ENCODE measurements at regions of chr12 and their contacts with region 1.

Region 1: DNA sequence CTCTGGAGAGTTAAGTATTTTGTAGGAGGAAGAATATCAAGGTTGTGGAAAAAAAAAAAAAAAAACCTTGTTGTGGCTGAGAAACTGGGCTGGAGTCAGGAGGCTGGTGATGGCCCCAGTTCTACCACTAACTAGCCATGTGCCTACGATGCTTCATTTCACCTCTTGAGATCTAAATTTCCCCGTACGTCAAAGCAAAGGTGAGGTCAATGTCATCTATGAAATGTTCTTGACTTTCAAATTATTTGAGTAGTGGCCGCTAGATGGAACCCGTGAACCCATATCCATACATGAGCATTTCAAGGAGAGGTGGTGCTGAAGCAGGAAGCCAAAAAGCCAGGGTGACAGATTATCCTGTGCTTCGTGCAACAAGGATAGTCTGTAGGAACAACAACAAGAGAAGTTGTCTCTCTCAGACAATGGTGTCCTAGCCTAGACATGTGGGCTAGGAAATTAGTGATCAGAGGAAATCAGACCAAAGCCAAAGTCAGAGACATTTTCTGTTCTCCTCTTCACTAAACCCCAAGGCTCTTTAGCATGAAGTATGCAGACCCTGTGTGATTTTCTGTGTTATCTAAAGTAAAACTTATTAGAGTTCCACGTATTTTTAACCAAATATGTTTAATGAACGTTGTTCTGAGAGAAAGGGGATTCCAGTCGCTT is 95.5 kb upstream of the ETV6 start:
- DNase-seq: peak; percentile 34
- ATAC-seq: peak; percentile 66
- H3K4me3 ChIP-seq: no peak overlapping the region
- H3K27ac ChIP-seq: no peak overlapping the region
- H3K4me1 ChIP-seq: no peaks in the 10 kb centered on the region
- H3K27me3 ChIP-seq: no peaks in the 10 kb centered on the region; a peak in 1 of 5 replicates
- CTCF ChIP-seq: peak; percentile 73
- EP300 ChIP-seq: no peak
- POLR2A ChIP-seq: no peak
- RAD21 ChIP-seq: no peak

Region 2: DNA sequence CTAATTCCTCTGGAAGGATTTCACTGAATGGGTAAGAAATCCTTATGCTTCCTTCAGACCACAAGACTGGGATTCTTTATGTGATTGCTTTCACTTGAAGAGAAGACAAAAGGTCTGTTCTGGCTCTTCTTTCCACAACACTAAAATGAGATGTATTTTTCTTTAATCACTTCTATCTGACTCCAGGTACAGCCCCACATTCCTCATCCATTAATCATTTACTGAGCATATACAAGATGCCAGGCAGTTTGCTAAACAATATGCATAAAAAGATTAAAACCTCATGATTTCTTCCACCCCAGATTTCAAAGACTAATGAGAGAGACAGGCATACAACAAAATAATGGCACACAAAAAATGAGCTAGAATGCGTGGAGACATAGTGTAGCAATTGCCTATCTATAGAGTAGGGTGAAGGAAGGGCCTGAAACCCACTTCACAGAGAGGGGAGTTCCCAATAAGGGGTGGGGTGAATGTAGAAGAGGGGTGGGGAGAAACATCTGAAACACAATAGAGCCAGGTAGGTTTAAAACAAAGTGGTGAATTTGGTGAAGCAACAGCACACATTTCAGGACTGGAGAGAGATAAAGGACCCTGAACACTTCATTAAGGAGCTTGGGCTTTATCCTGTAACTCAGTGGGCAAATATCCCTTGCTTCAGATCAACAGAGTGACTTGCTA is 93.5 kb before region 1 on chr12:
- CTCF ChIA-PET with region 1: no interaction called
- POLR2A ChIA-PET with region 1: no interaction called
- in situ Hi-C with region 1: no loop called
- intact Hi-C with region 1: no loop called
- DNase-seq: no peak
- ATAC-seq: no peak
- H3K4me3 ChIP-seq: no peak overlapping the region
- H3K27ac ChIP-seq: no peak overlapping the region
- H3K4me1 ChIP-seq: no peaks in the 10 kb centered on the region
- H3K27me3 ChIP-seq: peaks cover 0 to 2% of the 10 kb centered on the region in 2 experiments; a peak in 2 of 5 replicates
- CTCF ChIP-seq: no peak
- EP300 ChIP-seq: no peak
- POLR2A ChIP-seq: no peak
- RAD21 ChIP-seq: no peak

Region 3: DNA sequence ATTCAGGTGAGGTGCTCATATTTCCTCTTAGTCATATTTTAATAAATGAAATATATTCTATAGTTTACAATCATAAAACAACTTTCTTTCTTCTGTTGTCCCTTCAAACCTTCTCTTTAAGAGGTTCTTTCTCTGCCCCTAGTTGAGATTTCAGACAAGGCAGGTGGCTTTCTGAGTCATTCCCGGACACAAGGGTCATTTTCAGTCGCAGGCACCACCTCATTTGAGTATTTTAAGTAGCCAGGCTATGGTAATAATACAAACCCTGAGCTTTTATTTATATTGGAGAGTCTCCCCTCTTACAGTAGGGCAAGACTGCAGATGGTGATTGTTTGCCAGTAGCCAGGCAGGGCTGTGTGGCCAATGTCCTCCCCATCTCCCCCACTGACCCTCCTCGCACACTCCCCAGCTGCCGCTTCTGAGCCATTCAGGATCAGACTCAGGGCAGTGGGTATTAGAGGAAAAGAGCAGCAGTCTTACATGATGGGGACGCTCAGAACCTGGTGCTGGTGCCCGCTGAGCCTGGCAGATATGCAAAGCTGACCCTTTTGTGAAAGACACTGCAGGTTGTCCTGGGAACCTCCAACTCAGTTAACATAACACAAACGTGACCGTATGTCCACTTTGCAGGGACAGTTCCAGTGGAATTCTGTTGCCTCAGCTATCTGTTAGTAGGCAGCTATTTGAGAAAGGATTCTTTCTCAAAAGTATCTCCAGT is 415.6 kb after region 1 on chr12:
- CTCF ChIA-PET with region 1: no interaction called
- POLR2A ChIA-PET with region 1: no interaction called
- in situ Hi-C with region 1: no loop called
- intact Hi-C with region 1: no loop called
- DNase-seq: no peak
- ATAC-seq: no peak
- H3K4me3 ChIP-seq: no peak overlapping the region
- H3K27ac ChIP-seq: no peak overlapping the region
- H3K4me1 ChIP-seq: peaks cover 6% of the 10 kb centered on the region; the same call in 1 of the 2 replicates
- H3K27me3 ChIP-seq: peaks cover 0 to 16% of the 10 kb centered on the region in 2 experiments; a peak in 3 of 5 replicates
- CTCF ChIP-seq: no peak
- EP300 ChIP-seq: no peak
- POLR2A ChIP-seq: no peak
- RAD21 ChIP-seq: no peak

Region 4: DNA sequence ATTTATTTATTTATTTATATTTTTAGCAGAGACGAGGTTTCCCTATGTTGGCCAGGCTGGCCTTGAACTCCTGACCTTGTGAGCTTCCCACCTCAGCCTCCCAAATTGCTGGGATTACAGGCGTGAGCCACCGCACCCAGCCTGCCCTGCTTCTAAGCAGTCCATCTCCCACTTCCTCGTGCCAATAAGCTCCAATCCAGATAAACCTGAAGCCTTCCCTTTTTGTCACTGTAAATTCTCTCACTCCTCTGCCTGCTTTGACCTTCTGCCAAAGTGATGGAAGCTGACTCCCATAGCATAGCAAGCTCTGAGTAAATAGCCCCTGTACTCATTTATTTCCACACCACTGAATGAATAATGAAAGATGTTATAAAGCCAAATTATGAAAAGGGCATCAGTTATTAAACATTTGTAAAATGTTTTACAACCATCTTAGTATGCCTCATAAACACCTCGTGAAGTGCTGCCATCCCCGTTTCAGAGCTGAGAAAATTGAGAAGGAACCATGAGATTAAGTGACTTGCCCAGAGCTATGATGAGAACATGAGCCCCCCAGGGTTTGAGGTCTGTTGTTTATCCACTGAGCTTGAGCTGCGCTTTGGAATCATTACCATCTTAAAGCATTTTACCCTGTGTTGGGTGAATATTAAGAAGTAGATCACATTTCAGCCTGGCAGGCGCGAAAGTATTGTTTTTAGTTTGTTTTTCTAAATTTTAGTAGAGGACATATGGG is 765.6 kb after region 1 on chr12:
- CTCF ChIA-PET with region 1: no interaction called
- POLR2A ChIA-PET with region 1: no interaction called
- in situ Hi-C with region 1: loop called (anchors 25 kb)
- intact Hi-C with region 1: no loop called
- DNase-seq: peak; percentile 30
- ATAC-seq: peak; percentile 30; the same call in 1 of the 3 replicates
- H3K4me3 ChIP-seq: peak overlapping the region; percentile 43 to 57 (median 54); a peak in 4 of 6 replicates
- H3K27ac ChIP-seq: peak overlapping the region; percentile 63
- H3K4me1 ChIP-seq: peaks cover 48% of the 10 kb centered on the region
- H3K27me3 ChIP-seq: no peaks in the 10 kb centered on the region
- CTCF ChIP-seq: no peak
- EP300 ChIP-seq: no peak
- POLR2A ChIP-seq: no peak
- RAD21 ChIP-seq: no peak